Activated CD4-positive, alpha-beta T cell treated with anti-CD3 and anti-CD28 coated beads for 36 hours (primary cell): ENCODE measurements at regions of chr6 and their contacts with region 1.

Region 1: GRCh38 chr6:137873273-137873762 is 6.3 kb downstream of the TNFAIP3 start:
- DNase-seq: peak; percentile 93
- ATAC-seq: peak; percentile 56
- H3K4me3 Mint-ChIP-seq: peak overlapping the region; percentile 91
- H3K27ac Mint-ChIP-seq: peak overlapping the region; percentile 99
- H3K4me1 Mint-ChIP-seq: peaks cover 40% of the 10 kb centered on the region
- H3K27me3 Mint-ChIP-seq: no peaks in the 10 kb centered on the region

Region 2: GRCh38 chr6:137707590-137708360 is 165.5 kb before region 1 on chr6:
- CTCF ChIA-PET with region 1: interaction called, 88 read pairs
- POLR2A ChIA-PET with region 1: interaction called, 12 read pairs
- intact Hi-C with region 1: loop called in 1 of 2 experiments (anchors 1 kb)
- DNase-seq: peak; percentile 89
- ATAC-seq: peak; percentile 64
- H3K4me3 Mint-ChIP-seq: peak overlapping the region; percentile 62
- H3K27ac Mint-ChIP-seq: peak overlapping the region; percentile 94
- H3K4me1 Mint-ChIP-seq: peaks cover 77% of the 10 kb centered on the region
- H3K27me3 Mint-ChIP-seq: no peaks in the 10 kb centered on the region

Region 3: DNA sequence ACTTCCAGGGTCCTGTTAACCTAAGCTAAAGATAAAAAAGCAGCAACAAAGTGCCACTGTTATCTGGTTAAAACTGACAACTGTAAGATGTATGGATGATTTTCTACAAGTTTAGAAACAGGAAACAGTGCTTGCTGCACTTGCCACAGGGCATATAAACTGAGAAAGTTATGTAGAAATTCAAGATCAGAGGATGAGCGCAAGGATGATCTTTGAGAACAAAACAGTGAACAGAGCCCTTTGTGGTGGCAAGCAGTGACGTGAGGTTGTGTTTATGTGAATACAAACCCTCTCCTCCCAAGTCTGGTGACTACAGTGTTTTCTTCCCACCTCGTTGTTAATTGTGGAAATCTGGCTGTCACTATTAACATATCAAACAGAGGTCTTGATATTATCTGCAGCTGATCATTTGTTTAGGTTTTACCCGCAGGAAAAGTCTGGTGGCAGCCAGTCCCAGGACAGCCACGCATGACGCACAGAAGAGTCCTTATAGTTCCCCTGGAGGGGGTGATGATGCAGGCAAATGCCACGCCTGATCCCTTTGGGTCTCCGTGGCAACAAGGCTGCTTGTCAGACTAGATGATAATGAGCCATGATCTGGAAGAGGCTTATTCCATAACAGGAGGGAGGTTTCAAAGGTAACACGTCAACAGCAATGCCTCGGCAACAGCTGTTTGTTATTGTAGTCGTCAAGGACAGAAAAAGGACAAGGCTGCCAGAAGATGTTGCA is 49.3 kb before region 1 on chr6:
- CTCF ChIA-PET with region 1: interaction called, 5 read pairs
- POLR2A ChIA-PET with region 1: interaction called, 10 read pairs
- intact Hi-C with region 1: no loop called
- DNase-seq: peak; percentile 82
- ATAC-seq: peak; percentile 48
- H3K4me3 Mint-ChIP-seq: peak overlapping the region; percentile 58
- H3K27ac Mint-ChIP-seq: peak overlapping the region; percentile 93
- H3K4me1 Mint-ChIP-seq: peaks cover 86% of the 10 kb centered on the region
- H3K27me3 Mint-ChIP-seq: no peaks in the 10 kb centered on the region

Region 4: GRCh38 chr6:137910424-137910834 is 37.1 kb after region 1 on chr6:
- CTCF ChIA-PET with region 1: interaction called, 13 read pairs
- POLR2A ChIA-PET with region 1: interaction called, 5 read pairs
- intact Hi-C with region 1: loop called in 1 of 2 experiments (anchors 1 kb)
- DNase-seq: no peak
- ATAC-seq: peak; percentile 3
- H3K4me3 Mint-ChIP-seq: no peak overlapping the region
- H3K27ac Mint-ChIP-seq: peak overlapping the region; percentile 74
- H3K4me1 Mint-ChIP-seq: peaks cover 63% of the 10 kb centered on the region
- H3K27me3 Mint-ChIP-seq: no peaks in the 10 kb centered on the region

Region 5: GRCh38 chr6:137944793-137945498 is 71.6 kb after region 1 on chr6:
- CTCF ChIA-PET with region 1: interaction called, 47 read pairs
- POLR2A ChIA-PET with region 1: interaction called, 5 read pairs
- intact Hi-C with region 1: loop called (anchors 1 kb)
- DNase-seq: peak; percentile 36
- ATAC-seq: peak; percentile 37
- H3K4me3 Mint-ChIP-seq: no peak overlapping the region
- H3K27ac Mint-ChIP-seq: peak overlapping the region; percentile 23
- H3K4me1 Mint-ChIP-seq: peaks cover 52% of the 10 kb centered on the region
- H3K27me3 Mint-ChIP-seq: no peaks in the 10 kb centered on the region

Region 6: DNA sequence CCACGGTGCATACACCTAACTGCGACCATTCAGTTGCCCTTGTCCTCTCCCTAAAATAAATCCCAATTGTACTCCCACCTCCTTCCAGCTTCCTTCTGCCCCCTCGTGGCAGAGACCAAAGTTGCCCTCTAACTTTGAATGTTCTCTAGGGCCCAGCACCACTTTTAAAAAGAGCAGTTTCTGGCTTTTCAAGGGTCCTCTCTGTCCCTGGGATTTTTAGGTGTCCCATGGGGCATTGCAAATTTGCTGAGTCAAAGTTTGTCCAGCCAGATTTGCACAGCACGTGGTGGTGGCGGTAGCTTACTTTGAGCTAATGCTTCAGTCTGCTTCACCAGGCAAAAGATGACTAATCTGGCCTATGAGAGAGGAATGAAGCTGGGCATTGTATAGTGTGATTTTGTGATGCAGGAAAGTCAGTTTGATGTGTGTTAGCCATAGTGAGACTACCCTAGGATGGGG is 133.7 kb after region 1 on chr6:
- CTCF ChIA-PET with region 1: interaction called, 11 read pairs
- POLR2A ChIA-PET with region 1: interaction called, 7 read pairs
- intact Hi-C with region 1: no loop called
- DNase-seq: peak; percentile 65
- ATAC-seq: peak; percentile 66
- H3K4me3 Mint-ChIP-seq: no peak overlapping the region
- H3K27ac Mint-ChIP-seq: no peak overlapping the region
- H3K4me1 Mint-ChIP-seq: peaks cover 13% of the 10 kb centered on the region
- H3K27me3 Mint-ChIP-seq: no peaks in the 10 kb centered on the region